GM13976 (cell line): ENCODE measurements at regions of chr6 and their contacts with region 1.

Region 1: GRCh38 chr6:75208298-75209183 is 2.7 kb upstream of the COL12A1 start:
- DNase-seq: peak; percentile 66
- CTCF ChIP-seq: peak; percentile 84

Region 2: GRCh38 chr6:73747289-73747688 is 1461.3 kb before region 1 on chr6:
- in situ Hi-C with region 1: loop called (anchors 10 kb)
- DNase-seq: peak; percentile 44
- CTCF ChIP-seq: no peak

Region 3: DNA sequence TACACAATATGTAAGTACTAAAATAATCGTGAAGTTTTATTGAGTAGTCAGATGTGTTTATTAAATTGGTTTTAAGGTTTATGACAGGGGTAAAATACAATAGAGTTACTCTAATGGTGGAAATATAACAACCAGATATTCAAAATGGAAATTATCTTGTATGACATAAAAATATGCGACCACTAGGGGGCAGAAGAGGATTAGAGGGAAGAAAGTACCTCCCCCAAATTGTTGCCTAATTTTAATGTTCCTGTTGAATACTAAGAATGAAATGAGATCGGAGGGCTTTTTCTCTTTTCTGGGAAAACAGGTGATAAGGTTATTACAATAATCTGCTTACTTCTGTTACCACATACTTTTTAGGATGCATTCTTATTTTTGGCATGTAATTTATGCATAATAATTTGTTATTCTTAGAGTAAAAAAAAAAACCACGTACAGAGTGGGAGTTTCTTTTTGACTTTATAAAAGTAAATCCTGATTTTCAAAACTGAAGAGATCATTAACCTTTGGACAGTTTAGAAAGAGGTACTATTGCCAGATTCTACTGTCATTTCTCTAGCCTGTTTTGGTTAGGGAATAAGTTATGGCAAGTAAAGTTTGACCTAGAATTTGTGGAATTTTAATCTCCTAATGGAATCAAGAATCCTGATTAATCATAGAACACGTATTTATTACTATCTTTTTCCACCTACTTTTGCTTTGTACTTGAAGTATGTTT is 1353.4 kb before region 1 on chr6:
- in situ Hi-C with region 1: loop called (anchors 25 kb)
- DNase-seq: peak; percentile 51
- CTCF ChIP-seq: peak; percentile 58

Region 4: DNA sequence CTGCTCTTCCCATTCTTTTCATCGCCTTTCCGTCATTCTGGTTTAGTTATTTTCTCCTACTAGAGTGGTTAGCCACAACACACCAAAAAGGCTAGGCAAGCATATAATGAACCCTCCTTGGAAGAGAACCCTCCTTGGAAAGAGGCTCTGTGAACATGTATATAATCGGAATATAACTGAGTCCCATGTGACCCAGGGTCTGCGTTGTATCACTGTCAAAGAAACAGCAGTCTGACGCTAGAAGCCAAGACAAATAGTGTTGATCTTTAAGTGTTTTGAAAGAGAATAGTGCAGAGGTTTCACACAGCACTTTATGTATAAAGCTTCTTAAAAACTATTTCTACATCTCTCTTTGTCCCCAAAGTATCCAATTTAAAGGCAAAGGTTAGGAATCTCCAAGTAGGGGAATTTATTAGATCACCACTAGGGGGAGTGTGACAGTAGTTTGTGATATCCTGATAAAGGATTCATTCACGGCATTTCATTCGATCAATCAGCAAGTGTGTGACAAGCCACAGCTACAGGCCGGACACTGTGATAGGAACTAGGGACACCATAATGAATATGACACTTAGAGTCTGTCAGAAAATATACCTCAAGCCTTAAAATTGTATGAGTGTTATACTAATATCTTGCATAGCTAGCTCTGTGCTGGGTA is 1117.3 kb before region 1 on chr6:
- in situ Hi-C with region 1: loop called (anchors 25 kb)
- DNase-seq: peak; percentile 15
- CTCF ChIP-seq: peak; percentile 59

Region 5: GRCh38 chr6:74409447-74409846 is 799.1 kb before region 1 on chr6:
- in situ Hi-C with region 1: loop called (anchors 25 kb)
- DNase-seq: peak; percentile 1
- CTCF ChIP-seq: peak; percentile 18

Region 6: GRCh38 chr6:74574794-74575193 is 633.7 kb before region 1 on chr6:
- in situ Hi-C with region 1: loop called (anchors 25 kb)
- DNase-seq: no peak
- CTCF ChIP-seq: no peak

Region 7: DNA sequence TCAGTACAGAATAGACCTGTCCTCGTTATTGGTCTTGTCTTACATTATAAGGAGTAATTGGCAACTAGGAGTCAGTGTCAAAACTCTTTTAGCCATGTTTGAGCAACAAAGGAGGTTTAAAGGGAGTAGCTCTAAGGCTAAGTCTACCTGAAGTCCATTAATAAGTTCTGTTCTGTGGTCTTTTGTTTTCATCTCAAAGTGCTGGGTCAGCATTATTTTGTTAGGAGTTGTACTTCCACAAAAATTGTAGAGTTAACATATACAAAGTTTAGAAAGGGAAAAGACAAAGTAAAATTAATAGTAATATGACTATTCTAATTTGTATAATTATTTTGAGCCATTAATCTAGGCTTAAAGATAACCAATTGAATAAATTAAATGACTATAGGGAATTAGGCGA is 380.4 kb after region 1 on chr6:
- in situ Hi-C with region 1: no loop called
- DNase-seq: no peak
- CTCF ChIP-seq: no peak